ENCODE measurements at regions of chrX and their contacts with region 1.

Region 1: DNA sequence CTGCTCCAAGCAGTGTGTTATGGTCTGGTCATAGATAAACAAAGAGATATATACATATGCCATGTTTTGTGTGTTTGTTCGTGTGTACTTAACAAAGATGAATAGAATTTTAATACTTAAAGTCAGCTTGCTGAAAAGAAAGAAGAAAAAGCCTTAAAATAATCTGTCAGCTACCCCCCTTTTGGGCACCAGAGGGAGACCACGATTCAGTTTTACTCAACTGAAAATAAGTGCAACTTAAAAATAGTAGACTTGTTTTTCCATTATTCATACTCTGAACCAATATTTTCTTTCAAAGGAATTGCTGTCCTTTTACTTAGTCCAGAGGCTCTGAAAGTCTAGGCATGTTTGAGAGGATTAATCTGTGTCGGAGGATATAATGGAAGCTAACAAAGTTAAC is 181.7 kb upstream of the AGTR2 start:
- DNase-seq: no peak
- ATAC-seq: no peak
- H3K4me3 ChIP-seq: no peak overlapping the region
- H3K27ac ChIP-seq: no peak overlapping the region
- H3K4me1 ChIP-seq: no peaks in the 10 kb centered on the region
- H3K27me3 ChIP-seq: no peaks in the 10 kb centered on the region
- CTCF ChIP-seq: peak; percentile 21; the same call in 1 of the 2 replicates
- EP300 ChIP-seq: no peak
- POLR2A ChIP-seq: no peak
- RAD21 ChIP-seq: no peak

Region 2: DNA sequence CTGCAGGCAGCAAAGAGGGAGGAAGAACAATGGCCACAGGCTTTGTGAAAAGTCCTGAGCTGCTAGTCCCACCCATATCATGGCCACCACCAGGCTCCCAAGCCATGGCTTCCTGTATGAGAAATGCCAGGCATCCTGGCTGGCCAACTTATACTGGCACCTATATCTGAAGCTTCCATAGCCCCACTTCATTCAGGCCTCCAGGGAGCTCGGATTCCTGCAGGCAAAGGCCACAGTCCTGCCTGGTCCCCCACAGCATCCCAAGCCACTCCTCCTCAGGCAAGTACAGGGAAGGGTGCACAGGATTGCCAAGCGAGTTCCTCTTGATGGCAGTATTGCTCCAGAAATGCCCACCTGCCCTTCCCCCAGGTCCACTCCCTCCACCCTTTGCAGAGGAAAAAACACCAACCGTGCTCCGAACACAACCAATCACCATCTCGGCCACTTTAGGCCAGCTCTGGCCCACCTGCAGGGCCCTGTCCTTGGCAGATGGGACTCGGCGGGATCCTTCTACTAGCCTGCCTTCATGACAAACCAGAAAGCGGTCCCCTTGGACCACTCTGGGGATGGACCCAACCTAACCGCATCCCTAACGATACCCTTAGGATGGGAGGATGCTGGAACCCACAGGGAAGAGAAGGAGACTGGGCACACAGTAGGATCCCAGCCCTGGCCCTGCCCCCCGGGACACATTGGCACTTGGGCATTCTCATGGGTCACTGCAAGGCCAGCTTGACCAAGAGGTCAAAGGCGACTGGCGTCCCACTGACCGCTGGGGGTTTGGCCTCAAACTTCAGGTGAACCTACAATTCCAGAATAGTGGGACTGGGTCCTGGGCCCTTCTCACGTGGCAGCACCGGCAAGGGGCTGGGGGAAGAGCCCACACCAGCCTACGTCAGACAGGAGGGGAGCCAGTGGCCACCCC is 38.7 kb before region 1 on chrX:
- CTCF ChIA-PET with region 1: no interaction called
- POLR2A ChIA-PET with region 1: no interaction called
- in situ Hi-C with region 1: no loop called
- intact Hi-C with region 1: no loop called
- DNase-seq: peak; percentile 33
- ATAC-seq: peak; percentile 76
- H3K4me3 ChIP-seq: peak overlapping the region in 2 of 3 experiments; percentile 20 to 48; a peak in 5 of 6 replicates
- H3K27ac ChIP-seq: no peak overlapping the region
- H3K4me1 ChIP-seq: peaks cover 43% of the 10 kb centered on the region
- H3K27me3 ChIP-seq: peaks cover 0 to 4% of the 10 kb centered on the region in 2 experiments; a peak in 2 of 5 replicates
- CTCF ChIP-seq: peak; percentile 86
- EP300 ChIP-seq: no peak
- POLR2A ChIP-seq: no peak
- RAD21 ChIP-seq: peak; percentile 68

Region 3: DNA sequence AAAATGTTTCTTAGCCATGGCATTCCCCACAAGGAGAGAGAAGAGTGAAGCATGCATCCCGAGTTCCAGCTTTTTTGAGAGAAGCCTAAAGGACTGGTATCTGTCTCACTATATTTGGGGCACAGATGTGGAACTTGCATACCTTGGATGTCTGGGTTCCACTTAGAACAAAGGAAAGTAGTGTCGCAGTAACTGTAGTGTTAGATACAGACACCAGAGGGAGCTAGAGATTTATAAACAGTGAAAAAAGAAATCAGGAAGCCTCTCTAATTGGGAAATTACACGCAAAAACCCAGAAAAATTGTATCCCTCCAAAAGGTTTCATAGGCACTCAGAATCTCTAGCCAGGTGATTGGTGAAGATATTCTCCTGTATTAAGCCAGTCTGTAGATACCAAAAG is 216.1 kb after region 1 on chrX:
- CTCF ChIA-PET with region 1: no interaction called
- POLR2A ChIA-PET with region 1: no interaction called
- in situ Hi-C with region 1: no loop called
- intact Hi-C with region 1: loop called (anchors 10 kb)
- DNase-seq: peak; percentile 1
- ATAC-seq: no peak
- H3K4me3 ChIP-seq: no peak overlapping the region
- H3K27ac ChIP-seq: no peak overlapping the region
- H3K4me1 ChIP-seq: no peaks in the 10 kb centered on the region
- H3K27me3 ChIP-seq: no peaks in the 10 kb centered on the region
- CTCF ChIP-seq: peak; percentile 57
- EP300 ChIP-seq: no peak
- POLR2A ChIP-seq: no peak
- RAD21 ChIP-seq: no peak

Measured in HepG2 (cell line).